HCT116 (cell line): ENCODE measurements at regions of chr12 and their contacts with region 1.

Region 1: DNA sequence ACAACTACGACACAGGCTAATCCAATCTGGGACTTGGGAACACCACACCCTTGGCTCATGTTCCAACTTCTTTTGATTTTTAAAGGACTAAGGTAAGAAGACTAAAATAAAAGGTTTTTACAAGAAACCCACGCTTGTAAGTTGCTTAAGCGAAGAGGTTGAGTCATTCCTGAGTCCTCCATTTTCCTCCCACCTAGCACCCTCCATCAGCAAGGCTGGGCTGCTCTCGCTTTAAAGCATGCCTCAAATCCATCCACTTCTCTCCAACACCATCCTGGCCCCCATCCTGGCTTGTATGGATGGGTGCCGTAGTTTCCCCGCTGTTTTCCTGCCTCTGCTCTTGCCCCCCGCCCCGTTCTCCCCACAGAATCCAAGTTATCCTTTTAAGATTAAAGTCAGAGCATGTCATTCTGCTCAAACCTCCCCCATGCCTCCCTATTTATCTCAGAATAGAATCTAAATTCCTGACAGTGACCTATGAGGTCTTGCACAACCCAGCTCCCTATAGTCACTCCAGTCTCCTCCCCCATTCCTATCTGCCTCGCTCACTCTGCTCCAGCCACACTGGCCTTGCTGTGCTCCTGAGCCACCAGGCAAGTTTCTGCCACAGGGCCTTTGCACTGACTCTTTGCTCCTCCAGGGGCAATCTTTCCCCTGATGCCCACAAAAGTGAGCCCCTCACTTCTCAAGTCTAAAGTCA is 34.5 kb downstream of the SCARB1 start:
- DNase-seq: no peak
- ATAC-seq: peak; percentile 74
- H3K4me3 ChIP-seq: peak overlapping the region in 1 of 2 experiments; percentile 32; a peak in 2 of 4 replicates
- H3K27ac ChIP-seq: peak overlapping the region; percentile 63
- H3K4me1 ChIP-seq: peaks cover 44 to 69% of the 10 kb centered on the region in 2 experiments
- H3K27me3 ChIP-seq: no peaks in the 10 kb centered on the region
- CTCF ChIP-seq: no peak
- POLR2A ChIP-seq: no peak
- RAD21 ChIP-seq: no peak

Region 2: DNA sequence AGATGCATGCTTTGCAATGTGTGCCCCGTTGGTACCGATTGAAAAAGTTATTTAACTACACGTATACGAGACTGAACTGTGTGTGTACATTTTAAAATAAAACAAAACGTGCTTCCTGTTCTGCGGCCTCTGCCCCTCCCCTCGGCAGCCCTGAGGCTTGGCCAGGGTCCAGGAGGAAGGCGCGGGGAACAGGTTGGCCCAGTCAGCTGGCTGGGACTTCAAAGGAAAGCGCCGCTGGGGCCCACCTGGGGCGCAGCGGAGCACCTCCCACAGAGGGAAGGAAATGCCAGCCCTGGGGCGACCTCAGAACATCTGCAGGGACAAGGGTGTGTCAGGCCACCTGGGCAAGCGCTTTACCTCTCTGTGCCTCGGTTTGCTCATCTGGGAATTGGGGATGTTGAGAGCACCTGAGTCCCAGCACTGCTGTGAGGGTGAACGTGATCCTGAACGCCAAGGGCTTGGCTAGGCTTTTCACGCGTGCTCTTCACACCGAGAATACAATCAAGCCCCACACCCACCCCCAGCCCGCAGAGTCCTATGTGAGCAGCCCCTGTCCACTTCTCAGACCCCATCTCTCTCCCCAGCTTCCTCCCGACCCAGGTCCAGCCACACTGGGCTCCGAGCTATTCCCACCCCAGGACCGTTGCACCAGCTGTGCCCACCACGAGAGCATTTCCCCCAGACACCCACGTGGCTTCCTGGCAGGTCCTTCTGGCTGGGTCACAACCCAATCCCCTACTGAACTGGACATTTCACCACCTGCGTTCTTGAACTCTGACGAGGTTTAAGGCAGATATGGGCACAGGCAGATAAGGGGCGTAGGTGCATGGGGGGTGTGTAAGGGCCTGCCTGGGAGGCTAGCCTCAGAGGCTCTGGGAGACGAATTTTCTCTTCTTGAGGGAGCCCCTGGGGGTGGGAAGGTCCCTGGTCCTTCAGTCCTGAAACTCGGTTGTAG is 219.8 kb before region 1 on chr12:
- CTCF ChIA-PET with region 1: no interaction called
- POLR2A ChIA-PET with region 1: no interaction called
- RAD21 ChIA-PET with region 1: no interaction called
- intact Hi-C with region 1: no loop called
- DNase-seq: peak; percentile 64
- ATAC-seq: peak; percentile 81
- H3K4me3 ChIP-seq: peak overlapping the region; percentile 7 to 26
- H3K27ac ChIP-seq: peak overlapping the region; percentile 48
- H3K4me1 ChIP-seq: peaks cover 27 to 54% of the 10 kb centered on the region in 2 experiments
- H3K27me3 ChIP-seq: no peaks in the 10 kb centered on the region
- CTCF ChIP-seq: no peak
- POLR2A ChIP-seq: no peak
- RAD21 ChIP-seq: no peak; the same call in 1 of the 2 replicates

Region 3: GRCh38 chr12:124898200-124898922 is 69.2 kb after region 1 on chr12:
- CTCF ChIA-PET with region 1: no interaction called
- POLR2A ChIA-PET with region 1: no interaction called
- RAD21 ChIA-PET with region 1: no interaction called
- intact Hi-C with region 1: loop called (anchors 5 kb)
- DNase-seq: no peak
- ATAC-seq: peak; percentile 95
- H3K4me3 ChIP-seq: no peak overlapping the region
- H3K27ac ChIP-seq: no peak overlapping the region
- H3K4me1 ChIP-seq: peaks cover 6 to 20% of the 10 kb centered on the region in 2 experiments; a peak in 3 of 4 replicates
- H3K27me3 ChIP-seq: no peaks in the 10 kb centered on the region
- CTCF ChIP-seq: peak; percentile 84 to 99 (median 96)
- POLR2A ChIP-seq: no peak
- RAD21 ChIP-seq: peak; percentile 88

Region 4: GRCh38 chr12:124992874-124993625 is 163.9 kb after region 1 on chr12:
- CTCF ChIA-PET with region 1: no interaction called
- POLR2A ChIA-PET with region 1: no interaction called
- RAD21 ChIA-PET with region 1: no interaction called
- intact Hi-C with region 1: loop called (anchors 5 kb)
- DNase-seq: peak; percentile 91
- ATAC-seq: peak; percentile 50
- H3K4me3 ChIP-seq: peak overlapping the region; percentile 42 to 61
- H3K27ac ChIP-seq: peak overlapping the region; percentile 74
- H3K4me1 ChIP-seq: peaks cover 10 to 34% of the 10 kb centered on the region in 2 experiments; a peak in 3 of 4 replicates
- H3K27me3 ChIP-seq: no peaks in the 10 kb centered on the region
- CTCF ChIP-seq: peak in 2 of 3 experiments; percentile 54 to 56; a peak in 4 of 6 replicates
- POLR2A ChIP-seq: no peak
- RAD21 ChIP-seq: no peak